B cell (primary cell): ENCODE measurements at regions of chr2 and their contacts with region 1.

Region 1: DNA sequence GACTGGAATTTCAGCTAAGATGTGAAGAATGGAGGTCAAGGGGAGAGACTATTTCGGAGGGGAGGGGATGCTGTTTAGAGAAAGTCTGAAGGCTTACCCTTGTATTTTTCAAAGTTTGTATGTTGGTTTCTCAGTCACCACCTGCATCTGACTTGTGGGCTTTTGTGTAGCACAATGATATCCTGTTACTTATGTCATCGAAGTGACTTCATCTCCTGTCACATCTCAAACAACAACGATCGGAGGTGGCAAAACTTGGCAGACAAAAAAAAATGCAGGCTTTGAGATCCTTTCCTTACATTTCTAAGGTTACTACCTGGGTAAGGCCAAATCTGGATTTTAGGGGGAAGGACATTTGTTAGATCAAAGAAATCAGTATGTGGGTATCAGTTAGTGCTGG is 11.7 kb upstream of the CXCR4 start:
- DNase-seq: peak; percentile 73
- ATAC-seq: peak; percentile 2
- H3K4me3 ChIP-seq: peak overlapping the region in 2 of 5 experiments; percentile 4 to 11
- H3K4me3 Mint-ChIP-seq: peak overlapping the region; percentile 83
- H3K27ac ChIP-seq: peak overlapping the region; percentile 98 to 99
- H3K27ac Mint-ChIP-seq: peak overlapping the region; percentile 96
- H3K4me1 ChIP-seq: peaks cover 96 to 98% of the 10 kb centered on the region in 2 donors
- H3K4me1 Mint-ChIP-seq: peaks cover 94% of the 10 kb centered on the region
- H3K27me3 ChIP-seq: no peaks in the 10 kb centered on the region
- H3K27me3 Mint-ChIP-seq: no peaks in the 10 kb centered on the region
- CTCF ChIP-seq: no peak

Region 2: DNA sequence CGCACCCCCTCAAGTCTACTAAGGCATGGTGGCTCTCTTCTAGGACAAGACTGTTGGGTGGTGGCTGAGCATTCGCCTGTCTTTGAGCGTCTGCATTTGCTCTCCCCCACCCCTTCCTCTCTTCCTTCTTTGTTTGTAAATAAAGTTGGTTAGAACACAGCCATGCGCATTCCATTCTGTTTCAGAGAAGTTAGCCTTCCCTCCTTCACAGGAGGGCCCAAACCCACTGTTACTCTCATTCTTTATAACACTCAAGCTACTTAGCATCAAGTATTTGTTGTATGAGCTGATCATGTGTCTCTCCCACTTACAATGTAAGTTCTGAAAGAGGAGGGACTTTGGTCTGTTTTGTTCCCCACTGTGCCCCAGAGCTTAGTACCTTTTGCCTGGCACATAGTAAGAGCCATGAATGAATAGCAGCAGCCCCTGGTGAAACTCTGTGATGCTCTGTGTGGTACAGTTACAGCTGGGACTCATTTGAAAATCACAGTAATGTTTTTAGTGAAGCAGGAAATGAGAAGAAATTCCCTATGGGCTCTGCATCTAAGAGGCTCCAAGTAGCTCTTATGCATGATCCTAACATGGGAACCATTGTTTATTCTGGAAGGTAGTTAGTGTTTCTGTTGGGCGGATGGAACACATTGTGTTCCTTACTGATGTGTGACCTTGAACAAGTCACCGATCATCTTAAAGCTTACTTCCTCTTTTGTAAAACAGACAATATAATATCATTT is 1868.0 kb before region 1 on chr2:
- CTCF ChIA-PET with region 1: no interaction called
- POLR2A ChIA-PET with region 1: no interaction called
- intact Hi-C with region 1: loop called (anchors 10 kb)
- DNase-seq: peak; percentile 78
- ATAC-seq: peak; percentile 55
- H3K4me3 ChIP-seq: peak overlapping the region in 1 of 5 experiments; percentile 22
- H3K4me3 Mint-ChIP-seq: peak overlapping the region; percentile 80
- H3K27ac ChIP-seq: peak overlapping the region; percentile 94 to 96
- H3K27ac Mint-ChIP-seq: peak overlapping the region; percentile 99
- H3K4me1 ChIP-seq: peaks cover 92 to 94% of the 10 kb centered on the region in 2 donors
- H3K4me1 Mint-ChIP-seq: peaks cover 86% of the 10 kb centered on the region
- H3K27me3 ChIP-seq: no peaks in the 10 kb centered on the region
- H3K27me3 Mint-ChIP-seq: no peaks in the 10 kb centered on the region
- CTCF ChIP-seq: no peak

Region 3: GRCh38 chr2:134912361-134912760 is 1217.2 kb before region 1 on chr2:
- CTCF ChIA-PET with region 1: no interaction called
- POLR2A ChIA-PET with region 1: no interaction called
- intact Hi-C with region 1: no loop called
- DNase-seq: no peak
- ATAC-seq: no peak
- H3K4me3 ChIP-seq: no peak overlapping the region
- H3K4me3 Mint-ChIP-seq: no peak overlapping the region
- H3K27ac ChIP-seq: no peak overlapping the region
- H3K27ac Mint-ChIP-seq: no peak overlapping the region
- H3K4me1 ChIP-seq: peaks cover 7% of the 10 kb centered on the region in 2 donors
- H3K4me1 Mint-ChIP-seq: peaks cover 6% of the 10 kb centered on the region
- H3K27me3 ChIP-seq: no peaks in the 10 kb centered on the region
- H3K27me3 Mint-ChIP-seq: no peaks in the 10 kb centered on the region
- CTCF ChIP-seq: no peak

Region 4: GRCh38 chr2:136008205-136008865 is 121.3 kb before region 1 on chr2:
- CTCF ChIA-PET with region 1: no interaction called
- POLR2A ChIA-PET with region 1: no interaction called
- intact Hi-C with region 1: no loop called
- DNase-seq: peak; percentile 91
- ATAC-seq: peak; percentile 96
- H3K4me3 ChIP-seq: no peak overlapping the region
- H3K4me3 Mint-ChIP-seq: peak overlapping the region; percentile 68
- H3K27ac ChIP-seq: peak overlapping the region; percentile 76 to 88
- H3K27ac Mint-ChIP-seq: peak overlapping the region; percentile 86
- H3K4me1 ChIP-seq: peaks cover 50 to 51% of the 10 kb centered on the region in 2 donors
- H3K4me1 Mint-ChIP-seq: peaks cover 66% of the 10 kb centered on the region
- H3K27me3 ChIP-seq: no peaks in the 10 kb centered on the region
- H3K27me3 Mint-ChIP-seq: no peaks in the 10 kb centered on the region
- CTCF ChIP-seq: no peak

Region 5: GRCh38 chr2:136212423-136213378 is 83.1 kb after region 1 on chr2:
- CTCF ChIA-PET with region 1: interaction called, 55 read pairs
- POLR2A ChIA-PET with region 1: interaction called, 218 read pairs
- intact Hi-C with region 1: loop called (anchors 1 kb)
- DNase-seq: peak; percentile 81
- ATAC-seq: peak; percentile 74
- H3K4me3 ChIP-seq: no peak overlapping the region
- H3K4me3 Mint-ChIP-seq: peak overlapping the region; percentile 74
- H3K27ac ChIP-seq: peak overlapping the region; percentile 53 to 99
- H3K27ac Mint-ChIP-seq: peak overlapping the region; percentile 81
- H3K4me1 ChIP-seq: peaks cover 80 to 81% of the 10 kb centered on the region in 2 donors
- H3K4me1 Mint-ChIP-seq: peaks cover 96% of the 10 kb centered on the region
- H3K27me3 ChIP-seq: no peaks in the 10 kb centered on the region
- H3K27me3 Mint-ChIP-seq: no peaks in the 10 kb centered on the region
- CTCF ChIP-seq: no peak

Region 6: GRCh38 chr2:136217996-136218395 is 88.4 kb after region 1 on chr2:
- CTCF ChIA-PET with region 1: interaction called, 17 read pairs
- POLR2A ChIA-PET with region 1: interaction called, 20 read pairs
- intact Hi-C with region 1: no loop called
- DNase-seq: no peak
- ATAC-seq: no peak
- H3K4me3 ChIP-seq: no peak overlapping the region
- H3K4me3 Mint-ChIP-seq: peak overlapping the region; percentile 24
- H3K27ac ChIP-seq: no peak overlapping the region
- H3K27ac Mint-ChIP-seq: peak overlapping the region; percentile 64
- H3K4me1 ChIP-seq: peaks cover 64 to 76% of the 10 kb centered on the region in 2 donors
- H3K4me1 Mint-ChIP-seq: peaks cover 94% of the 10 kb centered on the region
- H3K27me3 ChIP-seq: no peaks in the 10 kb centered on the region
- H3K27me3 Mint-ChIP-seq: no peaks in the 10 kb centered on the region
- CTCF ChIP-seq: no peak